AG04450 (cell line): ENCODE measurements at regions of chr4 and their contacts with region 1.

Region 1: GRCh38 chr4:147866532-147867271 is 134.8 kb downstream of the ARHGAP10 start:
- DNase-seq: peak; percentile 85
- H3K4me3 ChIP-seq: no peak overlapping the region
- H3K27ac ChIP-seq: no peak overlapping the region
- H3K27me3 ChIP-seq: no peaks in the 10 kb centered on the region
- CTCF ChIP-seq: peak; percentile 99

Region 2: DNA sequence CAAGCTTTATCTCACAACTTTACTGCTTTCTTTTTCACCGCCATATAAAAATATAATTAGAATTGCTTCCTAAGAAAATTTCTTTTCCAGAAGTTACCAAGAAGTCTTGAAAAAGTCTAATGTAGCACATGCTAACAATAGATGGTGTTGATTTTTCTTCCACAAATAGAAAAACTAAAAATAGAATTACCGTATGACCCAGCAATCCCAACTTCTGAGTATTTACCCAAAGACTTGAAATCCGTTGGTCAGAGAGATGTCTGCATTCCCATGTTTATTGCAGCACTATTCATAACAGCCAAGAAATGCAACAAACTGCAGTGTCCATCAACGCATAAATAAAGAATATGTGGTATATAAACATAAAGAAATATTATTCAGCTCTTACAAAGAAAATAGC is 403.6 kb before region 1 on chr4:
- CTCF ChIA-PET with region 1: no interaction called
- POLR2A ChIA-PET with region 1: no interaction called
- DNase-seq: no peak
- H3K4me3 ChIP-seq: no peak overlapping the region
- H3K27ac ChIP-seq: no peak overlapping the region
- H3K27me3 ChIP-seq: no peaks in the 10 kb centered on the region
- CTCF ChIP-seq: no peak

Region 3: GRCh38 chr4:147605499-147605898 is 261.2 kb before region 1 on chr4:
- CTCF ChIA-PET with region 1: interaction called, 24 read pairs
- POLR2A ChIA-PET with region 1: no interaction called
- DNase-seq: no peak
- H3K4me3 ChIP-seq: no peak overlapping the region
- H3K27ac ChIP-seq: no peak overlapping the region
- H3K27me3 ChIP-seq: no peaks in the 10 kb centered on the region
- CTCF ChIP-seq: no peak

Region 4: GRCh38 chr4:147651563-147651962 is 215.1 kb before region 1 on chr4:
- CTCF ChIA-PET with region 1: interaction called, 83 read pairs
- POLR2A ChIA-PET with region 1: no interaction called
- DNase-seq: no peak
- H3K4me3 ChIP-seq: no peak overlapping the region
- H3K27ac ChIP-seq: no peak overlapping the region
- H3K27me3 ChIP-seq: no peaks in the 10 kb centered on the region
- CTCF ChIP-seq: no peak

Region 5: DNA sequence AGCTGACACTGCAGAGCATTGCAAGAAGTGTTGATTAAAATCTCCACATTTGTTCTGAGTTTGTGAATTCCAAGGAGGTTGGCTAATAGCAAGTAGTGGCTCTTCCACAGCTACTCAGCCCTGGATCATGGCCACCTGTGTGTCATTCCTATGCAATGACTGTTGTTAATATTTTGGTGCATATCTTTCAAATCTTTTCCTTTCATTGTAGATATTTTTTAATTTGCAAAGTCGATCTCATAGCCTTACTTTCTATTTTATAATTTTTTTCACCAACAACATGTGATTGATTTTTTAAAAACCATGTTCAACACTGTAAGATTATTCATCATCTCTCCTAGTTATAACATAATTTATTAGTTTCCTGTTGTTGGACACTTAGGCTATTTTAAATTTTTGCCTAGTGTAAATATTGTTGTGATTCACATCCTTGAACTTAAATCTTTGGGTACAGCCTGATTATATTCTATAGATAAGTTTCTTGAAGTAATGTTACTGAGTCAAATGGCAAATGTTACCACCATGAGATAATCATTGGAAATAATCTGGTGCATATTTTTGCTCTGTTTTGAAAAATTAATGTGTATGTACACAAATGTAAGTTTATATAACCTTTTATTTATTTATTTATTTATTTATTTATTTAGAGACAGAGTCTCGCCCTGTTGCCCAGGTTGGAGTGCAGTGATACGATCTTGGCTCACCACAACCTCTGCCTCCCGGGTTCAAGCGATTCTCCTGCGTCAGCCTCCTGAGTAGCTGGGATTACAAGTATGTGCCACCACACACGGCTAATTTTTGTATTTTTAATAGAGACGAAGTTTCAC is 151.9 kb before region 1 on chr4:
- CTCF ChIA-PET with region 1: interaction called, 123 read pairs
- POLR2A ChIA-PET with region 1: no interaction called
- DNase-seq: peak; percentile 60
- H3K4me3 ChIP-seq: no peak overlapping the region
- H3K27ac ChIP-seq: no peak overlapping the region
- H3K27me3 ChIP-seq: no peaks in the 10 kb centered on the region
- CTCF ChIP-seq: no peak

Region 6: GRCh38 chr4:147768113-147768512 is 98.6 kb before region 1 on chr4:
- CTCF ChIA-PET with region 1: interaction called, 41 read pairs
- POLR2A ChIA-PET with region 1: interaction called, 3 read pairs
- DNase-seq: no peak
- H3K4me3 ChIP-seq: no peak overlapping the region
- H3K27ac ChIP-seq: no peak overlapping the region
- H3K27me3 ChIP-seq: no peaks in the 10 kb centered on the region
- CTCF ChIP-seq: no peak

Region 7: GRCh38 chr4:147879676-147880075 is 13.0 kb after region 1 on chr4:
- CTCF ChIA-PET with region 1: interaction called, 56 read pairs
- POLR2A ChIA-PET with region 1: interaction called, 3 read pairs
- DNase-seq: no peak
- H3K4me3 ChIP-seq: no peak overlapping the region
- H3K27ac ChIP-seq: no peak overlapping the region
- H3K27me3 ChIP-seq: no peaks in the 10 kb centered on the region
- CTCF ChIP-seq: no peak

Region 8: DNA sequence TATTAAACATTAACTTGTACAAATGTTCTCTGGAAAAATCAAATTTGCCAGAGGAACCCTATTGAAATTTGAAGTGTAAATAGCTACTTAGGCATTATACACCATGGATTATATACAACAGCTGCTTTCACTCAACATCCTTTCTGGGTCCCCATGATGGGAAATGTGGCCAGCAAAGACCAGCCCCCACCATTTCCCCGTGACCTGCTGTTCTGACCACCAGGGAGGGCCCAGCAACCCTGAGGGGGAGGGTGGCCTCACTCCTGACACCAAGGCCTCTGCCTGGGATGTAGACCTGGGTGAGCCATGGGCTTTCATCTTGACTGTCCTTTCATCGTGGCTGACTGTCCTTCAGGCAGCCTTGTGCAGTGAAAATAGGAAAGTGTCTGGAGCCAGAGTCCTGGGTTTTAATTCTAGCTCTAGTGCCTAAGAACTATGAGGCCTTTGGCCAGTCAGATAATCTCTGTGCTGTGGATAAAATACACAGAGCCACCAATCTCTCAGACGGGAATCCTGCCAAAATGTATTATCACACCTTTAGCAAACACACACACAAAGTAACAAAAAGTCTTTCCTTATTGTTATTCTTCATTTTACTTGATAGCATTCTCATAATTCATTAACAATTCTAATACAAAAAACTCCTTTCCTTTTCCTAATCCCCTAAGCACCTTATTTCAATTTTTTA is 530.4 kb after region 1 on chr4:
- CTCF ChIA-PET with region 1: no interaction called
- POLR2A ChIA-PET with region 1: no interaction called
- DNase-seq: no peak
- H3K4me3 ChIP-seq: no peak overlapping the region
- H3K27ac ChIP-seq: no peak overlapping the region
- H3K27me3 ChIP-seq: no peaks in the 10 kb centered on the region
- CTCF ChIP-seq: no peak